Esophagus muscularis mucosa (tissue), 4 donors: ENCODE measurements at regions of chr1 and their contacts with region 1.

Region 1: DNA sequence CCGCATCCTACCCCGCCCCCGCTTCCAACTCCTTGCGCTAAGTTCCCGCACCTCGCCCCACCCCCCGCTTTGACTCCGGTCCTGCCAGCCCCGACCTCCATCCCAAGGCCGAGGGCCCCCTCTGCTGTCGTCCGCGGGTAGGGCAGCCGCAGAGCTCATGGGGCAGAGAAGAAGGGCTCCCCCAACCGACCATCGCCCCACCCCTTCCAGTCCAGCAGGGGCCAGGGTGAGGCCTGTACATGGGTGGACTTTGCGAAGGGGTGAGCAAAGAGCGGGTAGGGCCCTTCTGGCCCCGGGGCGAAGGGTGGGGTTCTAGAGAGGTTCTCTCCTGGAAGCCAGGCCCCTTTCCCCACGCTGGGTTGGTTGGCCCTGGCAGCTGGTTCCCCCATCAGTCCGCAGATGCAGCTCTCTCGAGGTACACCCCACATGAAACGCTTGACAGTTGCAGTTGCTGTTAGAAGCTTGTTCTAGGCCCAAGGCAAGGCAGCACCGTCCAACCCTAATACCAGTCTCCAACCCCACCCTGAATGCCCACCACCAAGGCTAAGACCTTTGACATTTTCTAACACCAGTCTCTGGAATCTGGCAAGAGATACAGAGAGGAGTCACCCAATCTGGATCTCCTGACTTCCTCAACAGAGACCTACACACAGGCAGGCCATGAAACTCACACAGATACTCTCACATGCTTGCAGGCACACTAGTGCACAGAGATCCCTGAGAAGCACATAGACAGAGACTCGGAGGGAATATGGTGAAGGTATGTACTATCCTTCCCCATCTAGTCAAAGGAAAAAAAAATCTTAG is 25.3 kb upstream of the ADGRB2 start:
- DNase-seq: peak; percentile 99
- H3K4me3 ChIP-seq: peak overlapping the region; percentile 64 to 67 (median 67)
- H3K27ac ChIP-seq: peak overlapping the region; percentile 71 to 79 (median 74)
- H3K4me1 ChIP-seq: peaks cover 4 to 23% (median 18%) of the 10 kb centered on the region in 4 donors
- H3K27me3 ChIP-seq: peaks cover 0 to 5% (median 0%) of the 10 kb centered on the region in 4 donors
- CTCF ChIP-seq: peak in 2 of 3 experiments; percentile 94 to 98
- EP300 ChIP-seq: no peak
- POLR2A ChIP-seq: no peak

Region 2: DNA sequence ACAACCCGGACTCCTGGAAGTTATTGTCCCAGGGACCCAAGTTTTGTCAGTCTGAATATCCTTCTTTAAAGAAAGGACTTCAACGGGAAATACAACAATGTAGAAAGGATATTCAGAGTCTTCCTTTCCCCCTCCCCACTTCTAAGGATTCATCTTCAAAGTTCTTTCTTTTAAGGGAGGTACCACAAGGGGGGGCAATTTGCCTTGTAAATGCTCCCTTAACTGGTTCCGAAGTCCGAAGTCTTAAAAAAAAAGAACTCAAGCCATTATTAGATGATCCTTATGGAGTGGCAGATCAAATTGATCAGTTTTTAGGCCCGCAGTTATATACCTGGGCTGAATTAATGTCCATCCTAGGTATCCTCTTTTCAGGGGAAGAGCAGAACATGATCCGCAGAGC is 329.4 kb before region 1 on chr1:
- intact Hi-C with region 1: no loop called
- DNase-seq: no peak
- H3K4me3 ChIP-seq: no peak overlapping the region
- H3K27ac ChIP-seq: no peak overlapping the region
- H3K4me1 ChIP-seq: no peaks in the 10 kb centered on the region
- H3K27me3 ChIP-seq: peaks cover 0 to 32% (median 0%) of the 10 kb centered on the region in 4 donors
- CTCF ChIP-seq: no peak
- EP300 ChIP-seq: no peak
- POLR2A ChIP-seq: no peak

Region 3: DNA sequence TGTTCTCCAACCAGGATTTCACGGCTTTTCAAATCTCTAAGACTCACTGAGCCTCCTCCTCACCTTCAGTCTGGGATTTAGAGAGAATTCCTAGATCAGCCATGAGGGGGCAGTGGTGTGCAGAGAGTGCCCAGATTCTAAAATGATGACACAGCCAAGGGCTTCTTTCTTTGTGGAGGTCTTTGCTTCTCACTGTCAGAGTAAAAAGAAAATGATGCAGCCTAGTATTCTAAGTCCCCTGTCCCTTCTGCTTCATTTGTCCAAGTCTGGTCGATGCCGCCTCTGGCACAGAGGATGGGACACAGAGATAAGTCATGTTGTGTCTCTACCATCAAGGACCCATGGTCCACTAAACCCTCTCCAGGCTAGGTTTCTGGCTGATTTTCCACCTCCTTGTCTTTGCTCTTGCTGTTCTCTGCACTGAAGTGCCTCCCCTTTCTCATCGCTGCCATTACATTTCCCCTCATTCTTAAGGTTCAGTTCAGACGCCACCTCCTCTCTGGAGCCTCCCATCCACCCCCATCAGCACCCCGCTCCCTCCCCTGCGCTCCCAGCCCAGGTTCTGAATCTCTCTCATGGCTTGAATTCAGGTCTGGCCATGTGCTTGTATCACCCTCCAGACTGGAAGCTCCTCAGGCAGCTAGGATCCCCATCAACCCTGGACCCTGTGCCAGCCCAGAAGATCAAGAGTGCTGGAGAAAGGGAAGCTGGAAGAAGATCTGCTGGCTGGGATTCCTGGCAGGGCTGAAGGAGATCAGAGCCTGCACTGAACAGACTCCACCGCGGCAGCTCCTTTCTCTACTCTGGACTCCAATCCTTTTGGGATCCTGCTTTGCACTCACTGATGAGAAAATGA is 225.1 kb before region 1 on chr1:
- intact Hi-C with region 1: loop called (anchors 5 kb)
- DNase-seq: peak; percentile 92
- H3K4me3 ChIP-seq: no peak overlapping the region
- H3K27ac ChIP-seq: no peak overlapping the region
- H3K4me1 ChIP-seq: peaks cover 7 to 12% (median 11%) of the 10 kb centered on the region in 4 donors
- H3K27me3 ChIP-seq: peaks cover 0 to 24% (median 0%) of the 10 kb centered on the region in 4 donors
- CTCF ChIP-seq: peak; percentile 90 to 91 (median 90)
- EP300 ChIP-seq: no peak
- POLR2A ChIP-seq: no peak

Region 4: DNA sequence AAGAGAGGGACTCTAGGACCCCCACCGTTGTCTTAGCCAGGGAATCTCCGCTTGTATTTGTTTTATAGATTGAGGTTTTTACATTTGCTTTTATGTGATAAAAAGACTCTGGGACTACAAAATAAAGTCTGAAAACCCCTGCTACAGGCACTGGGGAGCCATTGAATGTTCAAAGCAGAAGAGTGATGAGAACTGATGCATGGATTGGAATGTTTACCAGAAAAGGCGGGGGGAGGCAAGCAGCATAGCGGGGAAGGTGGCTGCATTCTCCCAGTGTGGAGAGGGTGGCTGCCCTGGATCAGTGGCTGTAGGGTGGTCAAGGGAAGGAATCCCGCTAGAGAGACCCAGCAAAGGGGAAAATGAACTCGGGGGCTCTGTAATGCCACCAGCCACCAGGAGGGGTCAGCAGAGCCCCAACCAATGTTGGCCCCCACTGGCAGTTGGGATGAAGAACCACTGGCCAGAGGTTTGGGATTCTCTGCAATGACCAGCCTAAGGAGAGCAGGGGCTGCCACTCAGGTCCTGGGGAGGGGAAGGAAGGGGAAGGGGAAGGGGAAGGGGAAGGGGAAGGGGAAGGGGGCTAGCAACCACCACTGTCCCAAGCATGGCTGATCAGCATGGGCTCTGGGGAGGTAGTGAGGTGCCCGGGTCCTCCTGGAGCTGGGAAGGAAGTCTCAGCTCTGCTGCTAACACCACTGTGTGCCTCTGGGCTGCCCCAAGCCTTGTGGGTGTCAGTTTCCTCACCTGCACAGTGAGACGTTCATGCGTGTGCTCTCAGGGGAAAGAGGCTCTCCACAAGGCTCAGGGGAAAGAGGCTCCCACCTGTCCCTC is 125.6 kb before region 1 on chr1:
- intact Hi-C with region 1: loop called (anchors 1 kb)
- DNase-seq: no peak
- H3K4me3 ChIP-seq: no peak overlapping the region
- H3K27ac ChIP-seq: peak overlapping the region in 1 of 4 donors; percentile 2
- H3K4me1 ChIP-seq: peaks cover 13 to 51% (median 38%) of the 10 kb centered on the region in 4 donors
- H3K27me3 ChIP-seq: no peaks in the 10 kb centered on the region
- CTCF ChIP-seq: peak; percentile 94 to 99 (median 98)
- EP300 ChIP-seq: no peak
- POLR2A ChIP-seq: no peak

Region 5: DNA sequence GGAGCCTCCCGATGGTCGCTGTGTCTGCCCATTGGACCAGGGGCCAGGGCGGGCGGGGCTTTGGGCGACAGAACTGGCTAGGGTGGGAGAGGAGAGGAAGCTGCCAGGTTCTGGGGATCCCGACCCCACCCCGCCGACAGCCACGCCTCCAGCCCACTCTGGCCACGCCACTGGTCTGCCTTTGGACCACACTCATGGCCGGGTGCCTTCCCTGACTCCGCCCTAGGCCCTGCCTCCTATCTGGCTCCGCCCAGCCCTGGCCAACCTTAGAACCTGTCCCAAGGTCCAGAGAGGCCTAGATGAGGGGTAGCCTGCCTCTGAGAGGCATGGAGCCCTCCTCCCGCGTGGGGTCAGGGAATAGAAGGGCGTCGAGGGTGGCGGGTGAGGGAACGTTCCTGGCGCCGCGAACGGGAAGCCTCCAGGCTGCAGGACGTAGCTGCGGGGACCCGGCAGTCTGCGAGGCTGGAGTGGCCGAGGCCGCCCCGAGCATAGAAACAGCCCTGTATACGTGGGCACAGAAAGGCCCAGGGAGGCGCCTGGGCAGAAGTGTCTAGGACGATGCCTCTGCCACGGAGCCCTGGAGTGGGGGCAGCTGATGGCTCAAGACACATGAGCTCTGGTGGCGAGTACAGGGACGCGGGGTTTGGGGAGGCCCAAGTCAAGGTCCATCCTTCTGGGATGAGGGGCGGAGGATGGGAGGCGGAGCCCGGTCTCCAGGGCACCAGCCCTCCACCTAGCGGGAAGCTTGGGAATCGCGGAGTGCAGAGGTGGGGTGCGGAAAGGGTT is 74.2 kb before region 1 on chr1:
- intact Hi-C with region 1: loop called (anchors 10 kb)
- DNase-seq: peak; percentile 99
- H3K4me3 ChIP-seq: peak overlapping the region; percentile 55 to 61 (median 56)
- H3K27ac ChIP-seq: peak overlapping the region; percentile 96 to 97 (median 96)
- H3K4me1 ChIP-seq: peaks cover 35 to 57% (median 52%) of the 10 kb centered on the region in 4 donors
- H3K27me3 ChIP-seq: no peaks in the 10 kb centered on the region
- CTCF ChIP-seq: peak; percentile 92 to 99 (median 94)
- EP300 ChIP-seq: no peak
- POLR2A ChIP-seq: no peak

Region 6: DNA sequence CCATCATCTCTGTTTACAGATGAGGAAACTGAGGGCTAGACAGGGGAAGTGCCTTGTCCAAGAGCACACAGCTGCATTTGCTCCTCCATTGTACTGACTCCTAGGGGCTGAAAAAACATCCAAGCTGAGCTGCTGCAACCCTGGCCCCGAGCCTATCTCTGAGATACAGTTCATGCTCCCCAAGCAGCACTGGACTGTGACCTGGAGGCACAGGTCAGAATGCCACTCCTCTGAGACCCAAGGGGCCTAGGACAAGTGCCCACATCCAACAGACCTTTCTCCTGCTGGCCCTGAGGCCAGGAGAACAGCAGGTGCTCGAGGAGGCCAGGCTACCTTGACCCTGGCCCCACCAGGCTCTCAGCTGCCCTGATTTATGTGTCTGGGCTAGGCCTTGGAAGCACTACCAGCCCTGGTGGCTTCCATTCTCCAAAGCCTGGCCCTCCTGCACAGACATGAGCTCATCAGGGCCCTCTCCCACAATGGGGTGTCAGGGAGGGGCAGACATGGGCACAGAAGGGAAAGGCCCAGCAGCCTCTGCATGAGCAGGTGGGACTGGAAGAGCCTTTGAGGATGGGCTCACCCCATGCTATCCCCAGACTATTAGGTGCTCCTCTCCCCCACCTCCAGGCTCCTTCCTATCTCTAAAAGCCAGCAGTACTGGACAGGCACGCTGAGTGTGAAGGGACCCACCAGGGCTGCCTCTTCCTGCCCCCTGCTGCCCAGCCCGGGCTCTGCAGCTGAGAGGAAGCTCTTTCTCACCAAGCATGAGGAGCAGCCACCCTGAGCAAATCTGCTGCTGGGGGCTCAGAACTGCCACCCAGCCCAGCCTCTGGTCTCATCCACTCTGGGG is 44.1 kb before region 1 on chr1:
- intact Hi-C with region 1: loop called (anchors 5 kb)
- DNase-seq: no peak
- H3K4me3 ChIP-seq: no peak overlapping the region
- H3K27ac ChIP-seq: no peak overlapping the region
- H3K4me1 ChIP-seq: peaks cover 0 to 20% (median 10%) of the 10 kb centered on the region in 4 donors
- H3K27me3 ChIP-seq: no peaks in the 10 kb centered on the region
- CTCF ChIP-seq: peak; percentile 57 to 77 (median 77)
- EP300 ChIP-seq: no peak
- POLR2A ChIP-seq: no peak

Region 7: DNA sequence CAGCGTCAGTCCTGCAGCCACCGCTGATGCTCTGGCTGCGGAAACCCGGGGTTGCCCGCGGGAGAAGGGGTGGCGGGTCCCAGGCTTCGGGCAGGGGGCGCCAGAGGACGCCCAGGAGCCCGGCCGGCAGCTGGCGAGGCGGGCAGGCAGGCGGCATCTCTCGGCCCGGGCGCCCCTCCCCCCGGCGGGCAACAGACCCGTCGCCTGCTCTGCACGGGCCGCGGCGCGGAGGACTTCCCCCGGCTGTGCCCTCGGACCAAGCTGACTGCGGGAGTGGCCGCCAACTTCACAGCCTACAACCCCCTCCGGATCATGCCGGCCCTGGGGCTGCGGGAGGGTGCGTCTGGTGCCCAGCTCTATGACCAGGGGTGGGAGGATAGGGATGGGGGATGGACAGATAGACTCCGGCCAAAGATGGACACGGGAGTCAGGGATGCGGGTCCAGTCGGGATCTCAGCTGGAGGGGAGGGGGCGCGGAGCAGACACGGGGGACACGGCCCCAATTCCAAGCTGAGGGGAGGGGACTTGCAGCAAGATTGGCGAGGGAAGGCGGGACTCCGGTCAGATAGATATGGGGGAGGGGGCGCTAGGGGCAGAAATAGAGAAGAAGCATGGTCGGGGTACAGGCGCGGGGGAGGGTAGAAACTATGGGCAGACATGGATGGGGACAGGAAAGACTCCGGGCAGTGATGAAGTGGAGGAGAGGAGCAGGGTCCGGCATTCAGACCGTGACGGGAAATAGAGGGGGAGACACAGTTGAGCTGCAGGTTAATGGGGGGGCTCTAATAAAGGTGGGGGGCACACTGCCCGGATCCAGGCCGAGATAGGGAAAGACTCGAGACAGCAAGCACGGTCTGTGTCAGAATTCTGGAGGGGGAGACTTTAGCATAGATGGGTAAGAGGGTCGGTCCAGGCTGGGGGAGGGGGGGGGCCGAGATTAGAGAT is 26.5 kb before region 1 on chr1:
- intact Hi-C with region 1: loop called (anchors 2 kb)
- DNase-seq: no peak
- H3K4me3 ChIP-seq: peak overlapping the region; percentile 59 to 66 (median 62)
- H3K27ac ChIP-seq: no peak overlapping the region
- H3K4me1 ChIP-seq: peaks cover 38 to 53% (median 44%) of the 10 kb centered on the region in 4 donors
- H3K27me3 ChIP-seq: peaks cover 0 to 37% (median 16%) of the 10 kb centered on the region in 4 donors
- CTCF ChIP-seq: peak; percentile 70 to 78 (median 72)
- EP300 ChIP-seq: no peak
- POLR2A ChIP-seq: no peak